ENCODE measurements at regions of chr4 and their contacts with region 1.

Region 1: GRCh38 chr4:107709916-107710315 is 10.1 kb downstream of the PAPSS1 start:
- DNase-seq: peak; percentile 64
- H3K4me3 ChIP-seq: peak overlapping the region in 1 of 3 experiments; percentile 14
- H3K27ac ChIP-seq: peak overlapping the region; percentile 65
- H3K4me1 ChIP-seq: peaks cover 20% of the 10 kb centered on the region
- H3K27me3 ChIP-seq: no peaks in the 10 kb centered on the region
- CTCF ChIP-seq: no peak
- POLR2A ChIP-seq: no peak

Region 2: GRCh38 chr4:107699466-107700206 is 10.3 kb before region 1 on chr4:
- CTCF ChIA-PET with region 1: interaction called, 5 read pairs
- POLR2A ChIA-PET with region 1: no interaction called
- dilution Hi-C with region 1: no loop called
- intact Hi-C with region 1: loop called (anchors 1 kb)
- DNase-seq: peak; percentile 76
- H3K4me3 ChIP-seq: no peak overlapping the region
- H3K27ac ChIP-seq: peak overlapping the region; percentile 60
- H3K4me1 ChIP-seq: peaks cover 28% of the 10 kb centered on the region
- H3K27me3 ChIP-seq: no peaks in the 10 kb centered on the region
- CTCF ChIP-seq: no peak
- POLR2A ChIP-seq: no peak

Measured in endothelial cell of umbilical vein (primary cell).